Heart left ventricle (tissue), 16 donors: ENCODE measurements at regions of chr3 and their contacts with region 1.

Region 1: GRCh38 chr3:57755668-57756527 is at the start of gene SLMAP:
- DNase-seq: peak; percentile 97 to 98 (median 98)
- ATAC-seq: peak; percentile 98 to 99 (median 99)
- H3K4me3 ChIP-seq: peak within 1 kb of the TSS; percentile 79 to 98 (median 93)
- H3K27ac ChIP-seq: peak within 1 kb of the TSS; percentile 80 to 93 (median 90)
- H3K4me1 ChIP-seq: peaks cover 0 to 45% (median 25%) of the 10 kb centered on the region in 12 donors
- H3K27me3 ChIP-seq: no peaks in the 10 kb centered on the region
- CTCF ChIP-seq: no peak
- POLR2A ChIP-seq: peak in 1 of 2 donors; percentile 61
- total RNA-seq, gene SLMAP: 163 to 534 (median 290) TPM

Region 2: GRCh38 chr3:57169872-57170623 is 585.9 kb before region 1 on chr3:
- intact Hi-C with region 1: loop called in 1 of 10 experiments (anchors 5 kb)
- DNase-seq: peak; percentile 74 to 88 (median 79)
- ATAC-seq: peak; percentile 62 to 89 (median 80)
- H3K4me3 ChIP-seq: peak overlapping the region; percentile 1 to 64 (median 55)
- H3K27ac ChIP-seq: peak overlapping the region in 5 of 12 donors; percentile 18 to 55 (median 31)
- H3K4me1 ChIP-seq: peaks cover 0 to 17% (median 5%) of the 10 kb centered on the region in 12 donors
- H3K27me3 ChIP-seq: peaks cover 0 to 10% (median 0%) of the 10 kb centered on the region in 9 donors
- CTCF ChIP-seq: peak; percentile 78 to 94 (median 85)
- POLR2A ChIP-seq: no peak

Region 3: GRCh38 chr3:57597122-57597923 is 158.6 kb before region 1 on chr3 and contains the start of gene ARF4:
- intact Hi-C with region 1: loop called in 5 of 10 experiments (anchors 2 to 5 kb)
- DNase-seq: peak; percentile 99 to 100 (median 100)
- ATAC-seq: peak; percentile 94 to 98 (median 96)
- H3K4me3 ChIP-seq: peak within 1 kb of the TSS; percentile 67 to 96 (median 83)
- H3K27ac ChIP-seq: peak within 1 kb of the TSS; percentile 87 to 99 (median 98)
- H3K4me1 ChIP-seq: peaks cover 7 to 54% (median 49%) of the 10 kb centered on the region in 12 donors
- H3K27me3 ChIP-seq: no peaks in the 10 kb centered on the region
- CTCF ChIP-seq: peak in 7 of 12 donors; percentile 10 to 65 (median 42)
- POLR2A ChIP-seq: peak; percentile 88 to 96
- total RNA-seq, gene ARF4: 56.6 to 99.8 (median 74.6) TPM

Region 4: DNA sequence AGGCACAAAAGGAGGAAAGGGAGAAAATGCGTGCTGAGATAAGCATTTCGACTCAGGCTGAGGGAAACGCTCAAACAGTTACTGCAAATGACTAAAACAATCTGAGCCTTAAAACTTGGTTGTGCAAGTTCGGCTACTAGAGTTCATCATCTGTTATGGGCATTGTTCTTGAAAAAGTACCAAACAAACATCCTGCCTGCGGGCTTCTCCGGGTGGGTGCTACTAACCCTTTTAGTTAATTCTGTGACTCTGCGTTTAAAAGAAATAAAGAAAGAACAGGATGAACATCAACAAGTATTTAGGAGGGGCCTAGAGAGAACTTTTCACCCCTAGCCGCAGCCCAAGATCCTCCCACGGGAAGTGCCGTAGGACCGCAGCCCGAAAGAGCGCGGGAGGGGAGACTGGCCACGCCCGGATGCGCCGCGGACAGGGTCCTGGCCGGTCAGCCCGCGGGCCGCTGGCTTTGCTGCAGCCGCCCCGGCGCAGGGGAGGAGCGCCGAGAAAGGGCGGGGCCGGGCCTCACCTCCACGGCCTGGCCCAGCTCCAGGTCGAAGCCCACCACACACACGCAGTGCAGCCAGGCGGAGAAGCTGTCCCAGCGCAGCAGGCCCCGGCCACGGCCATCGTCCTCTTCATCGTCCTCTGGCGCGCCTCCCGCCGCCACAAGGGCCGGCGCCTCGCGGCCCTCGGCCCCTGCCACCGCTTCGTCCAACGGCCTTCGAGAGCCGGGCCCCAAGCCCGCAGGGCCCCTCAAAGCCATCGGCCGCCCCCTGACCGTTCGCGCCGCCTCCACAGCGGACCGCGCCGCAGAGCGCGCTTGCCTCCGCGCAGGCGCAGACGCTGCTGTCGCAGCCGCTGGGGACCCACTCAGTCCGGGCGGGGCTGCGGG is 63.4 kb before region 1 on chr3 and contains the start of gene DENND6A:
- intact Hi-C with region 1: loop called (anchors 1 to 5 kb)
- DNase-seq: peak; percentile 88 to 99 (median 91)
- ATAC-seq: peak; percentile 91 to 97 (median 96)
- H3K4me3 ChIP-seq: peak within 1 kb of the TSS; percentile 50 to 97 (median 87)
- H3K27ac ChIP-seq: peak within 1 kb of the TSS; percentile 85 to 100 (median 99)
- H3K4me1 ChIP-seq: peaks cover 0 to 53% (median 33%) of the 10 kb centered on the region in 12 donors
- H3K27me3 ChIP-seq: no peaks in the 10 kb centered on the region
- CTCF ChIP-seq: peak in 2 of 12 donors; percentile 6 to 19
- POLR2A ChIP-seq: peak; percentile 70 to 95
- total RNA-seq, gene DENND6A: 12.3 to 27.9 (median 18.6) TPM

Region 5: DNA sequence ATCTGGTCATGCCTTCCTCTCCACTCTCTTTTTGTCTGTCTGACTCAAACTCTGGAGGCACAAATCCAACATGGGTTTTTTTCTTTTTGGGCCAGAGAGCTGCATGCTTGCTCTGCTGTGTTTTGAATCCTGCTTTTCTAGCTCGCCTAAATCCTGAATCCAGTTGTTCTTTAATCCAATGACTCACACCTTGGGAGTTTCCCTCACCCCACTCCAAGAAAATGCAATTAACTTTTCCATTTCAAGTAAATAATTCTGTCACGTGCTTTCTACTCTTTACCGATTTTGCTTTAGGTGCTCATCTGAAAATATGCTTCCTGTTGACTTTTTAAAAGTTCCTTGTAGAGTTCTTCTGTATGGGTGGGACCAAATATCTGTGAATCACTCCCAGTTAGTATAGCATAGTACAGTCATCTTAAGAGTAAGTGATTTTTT is 47.8 kb after region 1 on chr3:
- intact Hi-C with region 1: loop called in 1 of 10 experiments (anchors 5 kb)
- DNase-seq: peak in 1 of 5 donors; percentile 22
- ATAC-seq: peak; percentile 68 to 88 (median 82)
- H3K4me3 ChIP-seq: no peak overlapping the region
- H3K27ac ChIP-seq: peak overlapping the region in 7 of 12 donors; percentile 5 to 63 (median 23)
- H3K4me1 ChIP-seq: peaks cover 0 to 48% (median 30%) of the 10 kb centered on the region in 12 donors
- H3K27me3 ChIP-seq: no peaks in the 10 kb centered on the region
- CTCF ChIP-seq: no peak
- POLR2A ChIP-seq: no peak